ENCODE measurements at regions of chr1 and their contacts with region 1.

Region 1: GRCh38 chr1:239898062-239898730 is 193.5 kb upstream of the FMN2 start:
- DNase-seq: peak; percentile 85
- ATAC-seq: peak; percentile 97
- H3K4me3 Mint-ChIP-seq: no peak overlapping the region
- H3K27ac Mint-ChIP-seq: no peak overlapping the region
- H3K4me1 Mint-ChIP-seq: peaks cover 4% of the 10 kb centered on the region
- H3K27me3 Mint-ChIP-seq: peaks cover 4% of the 10 kb centered on the region
- CTCF ChIP-seq: peak; percentile 89

Region 2: DNA sequence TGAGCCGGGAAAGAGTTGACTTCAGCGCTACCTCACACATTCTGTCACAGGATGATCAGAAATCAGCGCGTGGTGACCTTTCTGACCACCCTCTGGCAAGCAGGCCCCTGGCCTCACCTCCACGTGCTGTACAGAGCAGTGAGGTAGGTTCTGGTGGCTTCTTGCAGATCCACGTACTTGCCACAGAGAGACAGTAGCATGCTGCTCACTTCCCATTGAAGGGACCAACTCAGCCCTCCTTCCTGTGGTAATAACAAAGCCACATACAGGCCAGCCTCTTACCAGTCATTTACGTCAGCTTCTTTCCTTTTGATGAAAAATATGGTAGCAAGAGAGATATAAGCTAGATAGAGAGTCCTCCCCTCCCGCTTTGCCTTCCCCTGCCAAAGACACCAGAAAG is 311.1 kb before region 1 on chr1:
- CTCF ChIA-PET with region 1: interaction called, 23 read pairs
- POLR2A ChIA-PET with region 1: no interaction called
- intact Hi-C with region 1: loop called (anchors 5 kb)
- DNase-seq: peak; percentile 71
- ATAC-seq: peak; percentile 99
- H3K4me3 Mint-ChIP-seq: no peak overlapping the region
- H3K27ac Mint-ChIP-seq: peak overlapping the region; percentile 36
- H3K4me1 Mint-ChIP-seq: peaks cover 14% of the 10 kb centered on the region
- H3K27me3 Mint-ChIP-seq: peaks cover 3% of the 10 kb centered on the region
- CTCF ChIP-seq: no peak

Region 3: GRCh38 chr1:239763850-239764249 is 134.3 kb before region 1 on chr1:
- CTCF ChIA-PET with region 1: no interaction called
- POLR2A ChIA-PET with region 1: no interaction called
- intact Hi-C with region 1: no loop called
- DNase-seq: no peak
- ATAC-seq: no peak
- H3K4me3 Mint-ChIP-seq: no peak overlapping the region
- H3K27ac Mint-ChIP-seq: no peak overlapping the region
- H3K4me1 Mint-ChIP-seq: no peaks in the 10 kb centered on the region
- H3K27me3 Mint-ChIP-seq: no peaks in the 10 kb centered on the region
- CTCF ChIP-seq: no peak

Region 4: DNA sequence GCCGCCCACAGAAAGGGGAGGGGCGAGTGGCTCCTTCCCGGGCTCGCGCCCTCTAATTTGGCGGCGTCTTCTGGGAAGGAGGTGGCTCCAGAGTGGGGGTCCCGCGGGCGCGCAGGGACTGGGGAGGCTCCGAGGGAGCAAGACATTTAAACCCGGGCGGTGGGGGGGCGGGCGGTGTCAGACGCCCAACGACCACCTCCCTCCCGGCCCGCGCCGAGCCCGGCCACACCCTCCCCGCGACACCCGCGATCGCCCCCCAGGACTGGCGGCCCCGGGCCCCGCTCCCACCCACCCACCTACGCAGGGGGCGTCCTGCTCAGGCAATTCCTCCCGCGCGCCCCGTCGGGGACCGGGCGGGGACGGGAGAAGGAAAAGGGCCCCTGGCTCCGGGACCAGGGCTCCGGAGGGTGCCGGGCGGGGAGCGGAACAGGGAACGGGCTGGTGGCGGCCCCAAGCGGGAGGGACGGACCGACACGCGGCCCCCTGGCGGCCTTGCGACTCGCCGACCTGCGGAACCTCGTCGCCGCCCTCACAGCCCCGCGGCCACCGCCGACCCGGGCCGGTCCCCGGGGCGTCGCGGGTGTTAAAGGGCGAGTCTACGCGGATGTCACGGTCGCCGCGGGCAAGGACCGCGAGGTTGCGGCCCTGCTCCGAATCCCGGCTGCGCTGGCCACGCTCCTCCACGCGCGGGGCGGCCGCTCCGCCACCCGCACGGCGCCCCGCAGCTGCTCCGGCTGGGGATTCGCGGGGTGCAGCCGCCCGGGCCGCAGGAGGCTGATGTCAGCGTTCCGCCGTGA is 99.5 kb after region 1 on chr1:
- CTCF ChIA-PET with region 1: no interaction called
- POLR2A ChIA-PET with region 1: no interaction called
- intact Hi-C with region 1: no loop called
- DNase-seq: peak; percentile 10
- ATAC-seq: peak; percentile 30
- H3K4me3 Mint-ChIP-seq: no peak overlapping the region
- H3K27ac Mint-ChIP-seq: no peak overlapping the region
- H3K4me1 Mint-ChIP-seq: peaks cover 2% of the 10 kb centered on the region
- H3K27me3 Mint-ChIP-seq: peaks cover 30% of the 10 kb centered on the region
- CTCF ChIP-seq: peak; percentile 23